Panc1 (cell line): ENCODE measurements at regions of chr2 and their contacts with region 1.

Region 1: DNA sequence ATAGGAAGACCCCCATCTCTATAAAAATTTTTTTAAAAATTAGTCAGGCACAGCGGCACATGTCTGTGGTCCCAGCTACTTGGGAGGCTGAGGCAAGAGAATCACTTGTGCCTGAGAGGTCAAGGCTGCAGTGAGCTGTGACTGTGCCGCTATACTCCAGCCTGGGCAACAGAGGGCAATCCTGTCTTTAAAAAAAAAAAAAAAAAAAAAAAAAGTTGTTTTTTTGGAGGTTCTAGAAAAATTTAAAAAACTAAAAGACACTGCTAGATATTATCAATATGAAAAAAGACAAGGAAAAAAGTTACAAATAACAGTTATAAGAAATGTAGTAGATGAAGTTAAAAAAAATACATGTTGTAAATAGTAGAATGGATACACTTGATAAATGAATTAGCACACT is 56.1 kb upstream of the C2orf15 start:
- DNase-seq: no peak
- ATAC-seq: 0 out of 2 replicates have a peak, but pooled peaks have one; percentile 66
- H3K4me3 ChIP-seq: no peak overlapping the region
- H3K27ac ChIP-seq: no peak overlapping the region
- H3K4me1 ChIP-seq: no peaks in the 10 kb centered on the region
- H3K27me3 ChIP-seq: peaks cover 6% of the 10 kb centered on the region; the same call in 1 of the 2 replicates
- CTCF ChIP-seq: peak; percentile 73

Region 2: DNA sequence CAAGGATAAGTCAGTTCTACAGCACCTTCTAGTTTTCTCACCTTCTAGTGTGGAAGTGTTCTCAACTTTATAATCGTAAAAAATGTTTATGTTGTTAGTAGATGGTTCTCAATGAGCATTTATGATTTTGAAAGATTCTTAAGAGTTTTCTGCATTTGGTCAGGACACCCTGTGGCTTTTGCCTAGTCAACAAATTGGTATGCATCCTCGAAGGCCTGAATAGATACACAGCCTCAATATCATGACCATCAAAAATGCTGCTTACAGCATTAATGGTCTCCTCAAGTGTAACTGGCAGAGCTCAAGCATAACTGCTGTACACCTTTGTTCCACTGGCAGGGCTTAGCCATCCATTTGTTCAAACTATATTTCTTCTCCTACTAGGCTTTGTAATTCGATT is 246.1 kb before region 1 on chr2:
- CTCF ChIA-PET with region 1: no interaction called
- POLR2A ChIA-PET with region 1: no interaction called
- in situ Hi-C with region 1: no loop called
- intact Hi-C with region 1: no loop called
- DNase-seq: no peak
- ATAC-seq: no peak
- H3K4me3 ChIP-seq: no peak overlapping the region
- H3K27ac ChIP-seq: no peak overlapping the region
- H3K4me1 ChIP-seq: peaks cover 4% of the 10 kb centered on the region; the same call in 1 of the 2 replicates
- H3K27me3 ChIP-seq: no peaks in the 10 kb centered on the region
- CTCF ChIP-seq: no peak

Region 3: DNA sequence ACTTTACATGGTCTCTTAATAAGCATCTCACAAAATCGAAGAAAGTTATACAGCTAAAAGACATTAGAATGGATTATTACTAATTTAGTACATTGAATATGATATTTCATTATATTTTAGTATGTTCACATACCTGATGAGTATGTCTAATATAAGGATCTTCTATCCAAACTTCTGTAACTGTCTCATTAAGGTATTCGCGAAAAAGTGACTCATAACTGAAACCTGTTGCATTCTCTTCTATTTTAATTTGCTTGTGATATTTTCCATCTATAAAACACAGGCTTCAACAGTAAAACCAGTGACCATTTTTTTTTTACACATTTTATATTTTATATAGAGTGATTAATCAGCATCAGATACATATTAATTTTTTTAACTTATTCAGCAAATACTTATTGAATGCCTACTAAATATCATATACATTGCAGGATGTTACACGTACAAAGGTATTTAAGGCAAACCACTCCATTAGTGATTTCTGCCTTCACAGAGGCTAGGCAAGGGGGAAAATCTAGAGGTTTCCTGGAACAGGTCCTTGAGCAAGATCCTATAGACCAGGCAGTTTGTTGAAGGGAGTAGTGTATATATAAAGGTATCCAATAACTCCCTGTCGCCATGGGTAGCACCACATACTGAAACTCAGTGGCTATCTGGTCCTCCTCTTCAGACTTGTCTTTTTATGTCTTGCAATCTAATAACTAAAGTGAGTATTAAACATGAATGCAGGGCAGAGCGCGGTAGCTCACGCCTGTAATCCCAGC is 86.1 kb after region 1 on chr2:
- CTCF ChIA-PET with region 1: no interaction called
- POLR2A ChIA-PET with region 1: no interaction called
- in situ Hi-C with region 1: no loop called
- intact Hi-C with region 1: loop called (anchors 10 kb)
- DNase-seq: no peak
- ATAC-seq: no peak
- H3K4me3 ChIP-seq: no peak overlapping the region
- H3K27ac ChIP-seq: no peak overlapping the region
- H3K4me1 ChIP-seq: no peaks in the 10 kb centered on the region
- H3K27me3 ChIP-seq: no peaks in the 10 kb centered on the region
- CTCF ChIP-seq: no peak

Region 4: DNA sequence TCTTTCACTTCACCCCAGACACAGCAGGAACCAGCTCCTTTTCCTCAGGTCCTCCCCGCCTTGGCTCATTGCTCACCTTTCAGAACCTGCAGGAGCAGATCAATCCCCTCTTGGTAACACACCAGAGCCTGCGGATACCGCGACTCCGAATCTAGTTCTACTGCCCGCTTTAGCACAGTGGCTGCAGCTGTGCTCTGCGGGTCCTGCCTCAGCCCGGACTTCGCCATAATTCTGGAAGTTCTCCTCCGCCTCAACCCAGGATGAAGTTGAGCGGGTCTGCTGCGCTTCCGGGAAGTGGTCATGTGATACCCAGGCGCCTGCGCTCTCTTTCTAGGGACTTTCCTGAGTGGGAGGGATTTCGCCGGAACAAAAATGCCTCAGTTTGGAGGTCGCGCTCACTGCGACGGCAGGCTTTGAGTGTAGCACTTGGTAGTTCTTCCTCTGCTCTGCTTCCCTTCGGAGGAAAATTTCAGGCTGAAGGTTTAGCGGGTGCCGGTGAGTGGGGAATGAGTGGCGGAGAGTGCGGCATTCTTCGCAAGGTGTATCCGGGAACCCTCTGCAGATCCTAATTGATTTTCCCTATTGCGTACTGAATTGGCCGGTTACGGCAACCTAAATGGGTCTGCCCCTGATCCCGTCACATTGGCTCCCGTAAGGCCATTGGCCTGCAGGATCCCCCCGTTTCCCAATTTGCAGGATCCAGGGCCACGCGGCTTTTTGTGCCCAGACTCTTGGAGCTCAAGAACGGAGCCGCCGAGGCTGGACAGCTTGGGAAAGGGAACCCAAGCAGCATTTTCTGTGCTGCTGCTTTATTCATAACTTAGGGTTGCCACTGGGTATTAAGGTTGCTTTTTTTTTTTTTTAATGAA is 95.6 kb after region 1 on chr2 and contains the starts of genes MITD1 and MRPL30:
- CTCF ChIA-PET with region 1: no interaction called
- POLR2A ChIA-PET with region 1: interaction called, 10 read pairs
- in situ Hi-C with region 1: no loop called
- intact Hi-C with region 1: loop called (anchors 10 kb)
- DNase-seq: peak; percentile 94
- ATAC-seq: peak; percentile 98
- H3K4me3 ChIP-seq: peak within 1 kb of the TSS; percentile 68 to 99
- H3K27ac ChIP-seq: peak within 1 kb of the TSS; percentile 88
- H3K4me1 ChIP-seq: peaks cover 12% of the 10 kb centered on the region
- H3K27me3 ChIP-seq: no peaks in the 10 kb centered on the region
- CTCF ChIP-seq: no peak
- total RNA-seq, gene MITD1: 36.0 TPM
- total RNA-seq, gene MRPL30: 25.6 TPM

Region 5: DNA sequence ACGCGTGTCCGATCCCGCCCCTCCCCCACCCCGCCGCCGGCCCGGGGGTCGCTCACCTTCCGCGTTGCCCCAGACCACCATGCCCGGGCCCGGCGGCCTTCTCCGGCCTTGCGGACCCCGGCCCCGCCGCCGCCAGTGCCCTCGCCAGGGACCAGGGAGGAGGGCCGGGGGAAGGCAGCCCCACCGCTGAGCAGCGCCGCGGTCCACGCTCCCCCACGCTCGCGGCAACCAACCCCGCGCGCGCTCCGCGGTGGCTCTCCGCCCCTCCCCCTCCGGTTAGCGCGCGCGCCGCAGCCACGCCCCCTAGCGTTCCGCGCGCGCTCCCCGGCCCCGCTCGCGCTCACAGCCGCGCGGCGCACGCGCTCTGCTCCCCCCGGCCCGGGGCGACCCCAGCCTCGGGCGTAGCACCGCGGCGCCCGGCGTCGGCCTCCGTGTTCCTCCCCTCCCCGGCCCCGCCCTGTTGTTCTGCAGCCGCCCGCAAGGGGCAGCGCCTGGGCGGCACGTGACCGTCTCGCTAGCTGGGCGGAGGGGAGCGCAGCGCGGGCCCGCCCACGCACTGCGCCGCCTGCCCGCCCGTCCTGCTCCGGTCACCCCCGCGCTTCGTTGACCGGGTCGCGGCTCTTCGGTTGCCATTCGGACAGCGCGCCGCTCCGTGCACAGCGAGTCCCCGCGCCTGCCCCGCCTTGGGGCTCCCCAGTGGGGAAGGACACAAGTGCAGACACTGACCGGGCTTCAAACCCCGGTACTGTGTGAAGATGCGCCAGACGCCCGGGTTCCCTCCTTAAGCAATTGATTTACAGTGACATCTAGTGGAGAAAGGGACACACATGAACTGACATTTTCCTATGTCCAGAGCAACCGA is 404.6 kb after region 1 on chr2 and contains the start of gene REV1:
- CTCF ChIA-PET with region 1: no interaction called
- POLR2A ChIA-PET with region 1: no interaction called
- in situ Hi-C with region 1: no loop called
- intact Hi-C with region 1: loop called (anchors 10 kb)
- DNase-seq: peak; percentile 78
- ATAC-seq: peak; percentile 92
- H3K4me3 ChIP-seq: peak within 1 kb of the TSS; percentile 92 to 99
- H3K27ac ChIP-seq: peak within 1 kb of the TSS; percentile 94
- H3K4me1 ChIP-seq: peaks cover 14% of the 10 kb centered on the region
- H3K27me3 ChIP-seq: peaks cover 2% of the 10 kb centered on the region; the same call in 1 of the 2 replicates
- CTCF ChIP-seq: peak; percentile 89
- total RNA-seq, gene REV1: 35.0 TPM